WTC11 (cell line): ENCODE measurements at regions of chr1 and their contacts with region 1.

Region 1: GRCh38 chr1:6489799-6490180 is 1.7 kb downstream of the PLEKHG5 start:
- DNase-seq: peak; percentile 87
- ATAC-seq: peak; percentile 46
- H3K4me3 Mint-ChIP-seq: peak overlapping the region; percentile 77
- H3K27ac Mint-ChIP-seq: no peak overlapping the region
- H3K4me1 Mint-ChIP-seq: peaks cover 30% of the 10 kb centered on the region
- H3K27me3 Mint-ChIP-seq: peaks cover 2% of the 10 kb centered on the region; the same call in 1 of the 2 replicates
- CTCF ChIP-seq: peak; percentile 99

Region 2: GRCh38 chr1:6275826-6276782 is 213.7 kb before region 1 on chr1:
- CTCF ChIA-PET with region 1: no interaction called
- POLR2A ChIA-PET with region 1: no interaction called
- DNase-seq: no peak
- ATAC-seq: no peak
- H3K4me3 Mint-ChIP-seq: no peak overlapping the region
- H3K27ac Mint-ChIP-seq: peak overlapping the region; percentile 83
- H3K4me1 Mint-ChIP-seq: peaks cover 24% of the 10 kb centered on the region
- H3K27me3 Mint-ChIP-seq: no peaks in the 10 kb centered on the region
- CTCF ChIP-seq: no peak

Region 3: DNA sequence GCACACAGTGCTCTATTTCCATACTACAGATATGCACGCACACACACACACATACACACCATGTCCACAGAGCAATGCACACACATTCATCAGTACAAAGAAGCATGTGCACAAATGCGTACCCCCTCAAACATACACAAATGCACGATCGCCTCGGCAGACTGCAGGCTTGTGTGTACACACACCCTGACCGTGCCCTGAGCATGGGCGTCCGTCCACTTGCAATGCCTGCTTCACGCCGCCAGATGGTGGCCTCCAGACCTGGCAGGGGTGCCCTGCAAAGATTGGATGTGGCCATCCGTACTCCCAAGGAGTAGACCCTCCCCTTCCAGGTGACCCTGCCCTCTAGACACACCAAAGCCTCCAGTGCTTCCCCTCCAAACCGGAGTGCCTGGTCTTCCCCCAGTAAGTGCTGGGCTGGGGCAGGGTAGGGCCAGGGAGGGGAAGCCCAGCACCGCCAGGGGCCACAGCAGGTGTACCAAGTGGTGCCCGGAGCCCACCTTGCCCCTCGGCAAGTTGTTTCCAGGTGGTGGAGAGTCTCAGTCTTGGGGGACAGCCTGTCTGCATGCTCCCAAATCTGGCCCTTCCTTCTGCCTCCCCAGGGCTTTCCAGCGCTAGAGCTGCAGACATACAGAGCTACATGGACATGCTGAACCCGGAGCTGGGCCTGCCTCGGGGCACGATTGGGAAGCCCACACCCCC is 44.6 kb before region 1 on chr1:
- CTCF ChIA-PET with region 1: interaction called, 40 read pairs
- POLR2A ChIA-PET with region 1: no interaction called
- DNase-seq: peak; percentile 78
- ATAC-seq: peak; percentile 14
- H3K4me3 Mint-ChIP-seq: no peak overlapping the region
- H3K27ac Mint-ChIP-seq: peak overlapping the region; percentile 58
- H3K4me1 Mint-ChIP-seq: peaks cover 37% of the 10 kb centered on the region
- H3K27me3 Mint-ChIP-seq: peaks cover 17% of the 10 kb centered on the region
- CTCF ChIP-seq: peak; percentile 49; the same call in 1 of the 2 replicates

Region 4: GRCh38 chr1:6454856-6455751 is 34.7 kb before region 1 on chr1:
- CTCF ChIA-PET with region 1: interaction called, 17 read pairs
- POLR2A ChIA-PET with region 1: no interaction called
- DNase-seq: peak; percentile 52
- ATAC-seq: peak; percentile 46
- H3K4me3 Mint-ChIP-seq: no peak overlapping the region
- H3K27ac Mint-ChIP-seq: no peak overlapping the region
- H3K4me1 Mint-ChIP-seq: peaks cover 19% of the 10 kb centered on the region
- H3K27me3 Mint-ChIP-seq: no peaks in the 10 kb centered on the region
- CTCF ChIP-seq: no peak

Region 5: GRCh38 chr1:6464514-6464836 is 25.3 kb before region 1 on chr1:
- CTCF ChIA-PET with region 1: interaction called, 43 read pairs
- POLR2A ChIA-PET with region 1: no interaction called
- DNase-seq: no peak
- ATAC-seq: no peak
- H3K4me3 Mint-ChIP-seq: peak overlapping the region; percentile 13; the same call in 1 of the 2 replicates
- H3K27ac Mint-ChIP-seq: peak overlapping the region; percentile 49; the same call in 1 of the 2 replicates
- H3K4me1 Mint-ChIP-seq: peaks cover 20% of the 10 kb centered on the region
- H3K27me3 Mint-ChIP-seq: peaks cover 2% of the 10 kb centered on the region; the same call in 1 of the 2 replicates
- CTCF ChIP-seq: no peak

Region 6: DNA sequence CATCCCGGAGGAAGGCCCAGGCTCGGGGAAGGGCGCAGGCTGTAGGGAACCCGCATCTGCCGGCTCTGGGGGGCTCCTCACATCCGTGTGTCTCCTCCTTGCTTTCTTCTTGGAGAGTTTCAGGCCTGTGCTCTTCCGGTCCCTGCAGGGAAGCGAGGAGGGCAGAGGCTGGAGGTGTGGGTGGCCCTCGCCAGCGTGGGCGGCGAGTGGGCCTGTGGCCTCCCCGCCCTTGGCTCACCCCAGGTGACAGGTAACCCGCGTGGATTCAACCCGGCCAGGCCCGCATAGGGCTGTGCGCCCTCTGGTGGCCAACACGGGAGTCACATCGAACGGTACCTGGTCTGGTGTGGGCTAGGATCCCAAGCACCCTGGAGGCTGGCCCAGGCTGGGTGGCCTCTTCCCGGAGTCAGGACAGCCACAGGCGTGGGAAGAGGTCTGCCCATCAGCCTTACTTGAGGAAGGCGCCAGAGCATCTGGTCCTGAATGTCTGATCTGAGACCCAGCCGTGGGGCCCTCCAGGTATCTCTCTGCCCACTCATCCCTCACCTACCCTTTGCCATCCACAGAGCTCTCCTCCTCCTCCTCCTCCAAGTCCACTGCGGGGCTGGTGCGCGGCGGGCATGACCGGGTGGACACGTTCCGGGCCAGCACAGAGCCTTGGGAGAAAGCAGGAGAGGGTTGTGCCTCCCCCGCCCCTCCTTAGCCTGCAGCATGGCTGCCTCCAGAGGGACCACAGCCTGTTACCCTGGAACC is 14.2 kb before region 1 on chr1:
- CTCF ChIA-PET with region 1: interaction called, 43 read pairs
- POLR2A ChIA-PET with region 1: interaction called, 10 read pairs
- DNase-seq: peak; percentile 80
- ATAC-seq: peak; percentile 34
- H3K4me3 Mint-ChIP-seq: no peak overlapping the region
- H3K27ac Mint-ChIP-seq: no peak overlapping the region
- H3K4me1 Mint-ChIP-seq: peaks cover 34% of the 10 kb centered on the region
- H3K27me3 Mint-ChIP-seq: no peaks in the 10 kb centered on the region
- CTCF ChIP-seq: peak; percentile 97

Region 7: DNA sequence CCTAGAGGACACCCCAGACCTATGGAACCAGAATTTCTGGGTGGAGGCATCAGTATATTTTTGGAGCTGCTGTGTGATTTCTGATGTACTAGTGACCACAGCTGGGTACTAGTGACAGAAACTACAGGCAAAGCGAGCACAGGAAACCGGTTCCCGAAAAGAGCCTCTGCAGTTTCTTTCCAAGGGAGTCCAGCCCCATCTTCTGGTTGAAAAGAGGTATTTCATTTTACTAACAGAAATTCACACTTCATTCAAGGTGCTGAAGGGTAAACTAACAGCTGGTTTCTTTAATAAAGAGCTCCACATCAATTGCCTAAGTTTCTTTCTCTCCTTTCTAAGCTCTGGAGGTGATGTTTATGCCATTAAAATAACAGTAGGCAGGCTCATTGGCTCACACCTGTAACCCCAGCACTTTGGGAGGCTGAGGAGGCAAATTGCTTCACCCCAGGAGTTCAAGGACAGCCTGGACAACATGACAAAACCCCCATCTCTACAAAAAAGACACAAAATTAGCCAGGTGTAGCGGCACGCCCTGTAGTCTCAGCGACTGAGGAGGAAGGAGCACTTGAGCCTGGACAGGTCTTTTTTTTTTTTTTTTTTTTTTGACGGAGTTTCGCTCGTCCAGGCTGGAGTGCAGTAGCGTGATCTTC is 156.8 kb after region 1 on chr1:
- CTCF ChIA-PET with region 1: interaction called, 11 read pairs
- POLR2A ChIA-PET with region 1: no interaction called
- DNase-seq: peak; percentile 27
- ATAC-seq: peak; percentile 76
- H3K4me3 Mint-ChIP-seq: no peak overlapping the region
- H3K27ac Mint-ChIP-seq: peak overlapping the region; percentile 71
- H3K4me1 Mint-ChIP-seq: peaks cover 16% of the 10 kb centered on the region
- H3K27me3 Mint-ChIP-seq: no peaks in the 10 kb centered on the region
- CTCF ChIP-seq: peak; percentile 60